Activated T-helper 1 cell treated with anti-CD3 and anti-CD28 coated beads, Interleukin-12 subunit alpha, Interleukin-12 subunit beta, Interleukin-2, Interleukin-4 antibody, amounts not matched to agents 30 ng/mL and 10 ng/mL and 1 ng/mL, durations not matched to agents 14 hours and 24 hours and 36 hours (primary cell): ENCODE measurements at regions of chr11 and their contacts with region 1.

Region 1: GRCh38 chr11:57567515-57568329 is at the start of gene UBE2L6:
- DNase-seq: peak; percentile 53
- H3K4me3 Mint-ChIP-seq: peak within 1 kb of the TSS; percentile 99
- H3K27ac Mint-ChIP-seq: peak within 1 kb of the TSS; percentile 97
- H3K4me1 Mint-ChIP-seq: peaks cover 41% of the 10 kb centered on the region
- H3K27me3 Mint-ChIP-seq: no peaks in the 10 kb centered on the region
- total RNA-seq, gene UBE2L6: 155 and 163 TPM in 2 replicates

Region 2: GRCh38 chr11:57335343-57336110 is 232.2 kb before region 1 on chr11 and contains the start of gene SSRP1:
- intact Hi-C with region 1: loop called (anchors 2 kb)
- DNase-seq: peak; percentile 81
- H3K4me3 Mint-ChIP-seq: peak within 1 kb of the TSS; percentile 92
- H3K27ac Mint-ChIP-seq: peak within 1 kb of the TSS; percentile 99
- H3K4me1 Mint-ChIP-seq: peaks cover 39% of the 10 kb centered on the region
- H3K27me3 Mint-ChIP-seq: peaks cover 1% of the 10 kb centered on the region
- total RNA-seq, gene SSRP1: 235 and 239 TPM in 2 replicates

Region 3: GRCh38 chr11:57456960-57457642 is 110.6 kb before region 1 on chr11:
- intact Hi-C with region 1: loop called (anchors 1 kb)
- DNase-seq: peak; percentile 65
- H3K4me3 Mint-ChIP-seq: peak overlapping the region; percentile 72
- H3K27ac Mint-ChIP-seq: no peak overlapping the region
- H3K4me1 Mint-ChIP-seq: peaks cover 36% of the 10 kb centered on the region
- H3K27me3 Mint-ChIP-seq: peaks cover 53% of the 10 kb centered on the region

Region 4: GRCh38 chr11:57644748-57645688 is 77.3 kb after region 1 on chr11:
- intact Hi-C with region 1: loop called (anchors 1 kb)
- DNase-seq: peak; percentile 77
- H3K4me3 Mint-ChIP-seq: no peak overlapping the region
- H3K27ac Mint-ChIP-seq: no peak overlapping the region
- H3K4me1 Mint-ChIP-seq: peaks cover 48% of the 10 kb centered on the region
- H3K27me3 Mint-ChIP-seq: peaks cover 39% of the 10 kb centered on the region

Region 5: GRCh38 chr11:57712256-57713150 is 144.8 kb after region 1 on chr11 and contains the start of gene TMX2:
- intact Hi-C with region 1: loop called (anchors 1 kb)
- DNase-seq: peak; percentile 88
- H3K4me3 Mint-ChIP-seq: peak within 1 kb of the TSS; percentile 97
- H3K27ac Mint-ChIP-seq: peak within 1 kb of the TSS; percentile 94
- H3K4me1 Mint-ChIP-seq: peaks cover 53% of the 10 kb centered on the region
- H3K27me3 Mint-ChIP-seq: no peaks in the 10 kb centered on the region
- total RNA-seq, gene TMX2: 95.9 and 96.8 TPM in 2 replicates

Region 6: DNA sequence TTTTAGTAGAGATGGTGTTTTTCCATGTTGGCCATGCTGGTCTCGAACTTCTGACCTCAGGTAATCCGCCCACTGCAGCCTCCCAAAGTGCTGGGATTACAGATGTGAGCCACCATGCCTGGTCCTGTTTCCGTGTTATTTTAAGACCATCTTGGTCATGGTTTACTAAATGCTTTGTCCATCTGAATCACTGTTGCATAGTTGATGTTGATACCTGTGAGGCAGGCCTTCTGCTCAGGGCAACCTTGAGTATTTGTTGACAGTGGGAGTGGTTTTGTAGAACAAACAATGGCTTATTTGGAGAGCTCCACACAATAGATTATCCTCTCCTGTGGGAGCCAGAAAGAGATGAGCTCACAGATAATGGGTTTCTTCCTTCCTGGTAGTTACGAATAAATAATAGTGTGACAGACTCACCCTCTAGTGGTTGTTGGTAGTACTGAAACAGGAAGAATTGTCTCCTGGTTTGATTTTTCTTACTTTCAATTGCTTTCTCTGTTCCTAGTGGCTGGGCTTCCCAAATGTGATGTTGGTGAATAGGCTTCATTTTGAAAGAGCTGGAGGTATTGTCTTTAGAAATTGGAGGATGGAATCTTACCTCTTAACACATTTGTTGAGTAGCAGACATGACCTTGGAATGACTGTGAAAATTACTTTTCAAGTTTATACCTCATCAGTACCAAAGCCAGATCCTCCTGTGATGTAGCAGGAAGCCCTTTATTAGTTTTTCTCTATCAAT is 232.9 kb after region 1 on chr11:
- intact Hi-C with region 1: loop called (anchors 1 kb)
- DNase-seq: peak; percentile 13
- H3K4me3 Mint-ChIP-seq: no peak overlapping the region
- H3K27ac Mint-ChIP-seq: peak overlapping the region; percentile 26
- H3K4me1 Mint-ChIP-seq: peaks cover 23% of the 10 kb centered on the region
- H3K27me3 Mint-ChIP-seq: no peaks in the 10 kb centered on the region

Region 7: GRCh38 chr11:58524232-58525036 is 956.7 kb after region 1 on chr11:
- intact Hi-C with region 1: loop called (anchors 1 kb)
- DNase-seq: no peak
- H3K4me3 Mint-ChIP-seq: peak overlapping the region; percentile 74
- H3K27ac Mint-ChIP-seq: peak overlapping the region; percentile 77
- H3K4me1 Mint-ChIP-seq: peaks cover 36% of the 10 kb centered on the region
- H3K27me3 Mint-ChIP-seq: no peaks in the 10 kb centered on the region